Gastrocnemius medialis (tissue), 4 donors: ENCODE measurements at regions of chr10 and their contacts with region 1.

Region 1: DNA sequence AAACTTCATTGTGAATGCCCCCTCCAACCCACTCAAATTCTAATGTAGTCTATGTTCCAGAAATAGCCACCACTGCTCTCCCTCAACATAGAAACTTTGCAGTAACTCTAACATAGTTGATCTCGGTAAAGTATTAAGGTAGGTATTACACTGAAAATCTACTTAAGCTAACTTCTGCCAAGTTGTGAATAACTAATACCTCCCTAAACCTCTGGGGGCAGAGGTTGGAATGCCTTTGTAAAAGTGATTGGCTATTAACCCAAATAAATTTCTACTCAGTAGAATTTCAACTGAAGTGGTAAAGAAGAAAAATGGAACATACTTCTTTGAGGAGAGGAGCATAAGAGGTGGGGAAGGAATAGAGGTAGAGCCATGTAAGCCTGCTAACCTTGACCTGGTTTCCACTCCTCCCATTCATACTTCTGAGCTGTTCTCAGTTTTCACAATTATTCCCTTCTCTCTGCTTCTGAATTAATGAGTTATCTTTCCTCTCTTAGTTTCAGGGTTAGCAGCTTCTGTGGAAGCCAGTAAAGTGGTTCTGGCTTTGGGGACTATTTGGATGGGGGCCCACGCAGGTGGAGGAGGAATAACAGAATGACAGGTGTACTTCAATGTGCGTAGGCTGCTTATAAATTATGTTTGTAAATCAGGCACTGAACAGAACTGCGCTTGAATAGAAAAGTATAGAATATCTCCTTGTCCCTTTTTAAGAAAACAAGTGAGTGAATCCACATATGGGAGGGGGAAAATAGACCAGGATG is 129.1 kb upstream of the GAD2 start:
- DNase-seq: no peak
- ATAC-seq: no peak
- H3K4me3 ChIP-seq: no peak overlapping the region
- H3K27ac ChIP-seq: no peak overlapping the region
- H3K4me1 ChIP-seq: no peaks in the 10 kb centered on the region
- H3K27me3 ChIP-seq: no peaks in the 10 kb centered on the region
- CTCF ChIP-seq: no peak
- POLR2A ChIP-seq: no peak

Region 2: DNA sequence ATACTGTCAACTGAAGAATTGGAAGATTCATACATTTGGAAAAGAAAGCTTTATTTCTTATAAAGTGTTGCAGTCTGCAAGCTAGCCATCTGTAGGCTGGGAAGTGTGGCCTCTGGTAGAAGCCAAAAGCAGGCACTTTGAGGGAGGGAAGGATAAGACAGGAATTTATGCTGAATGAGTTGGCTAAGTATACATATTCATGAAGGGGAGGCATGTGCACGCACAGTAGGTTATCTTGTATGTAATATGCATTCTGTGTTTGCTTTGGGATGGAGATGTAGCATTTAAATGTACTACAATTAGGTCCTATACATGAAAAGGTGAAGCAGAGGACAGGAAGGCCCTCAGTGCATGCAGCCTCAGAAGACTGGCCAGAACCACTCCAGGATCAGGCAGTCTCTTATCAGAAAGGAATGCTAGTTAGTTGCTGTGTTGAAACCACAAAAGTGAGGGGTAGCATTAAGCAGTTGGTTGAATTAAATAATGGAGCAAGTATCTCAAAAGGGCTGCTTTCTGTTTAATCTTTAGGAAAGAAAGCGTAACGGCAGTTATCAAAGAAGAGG is 112.5 kb before region 1 on chr10:
- in situ Hi-C with region 1: loop called in 1 of 4 experiments (anchors 25 kb)
- intact Hi-C with region 1: no loop called
- DNase-seq: no peak
- ATAC-seq: no peak
- H3K4me3 ChIP-seq: no peak overlapping the region
- H3K27ac ChIP-seq: no peak overlapping the region
- H3K4me1 ChIP-seq: no peaks in the 10 kb centered on the region
- H3K27me3 ChIP-seq: no peaks in the 10 kb centered on the region
- CTCF ChIP-seq: no peak
- POLR2A ChIP-seq: no peak